Ascending aorta (tissue), 2 donors: ENCODE measurements at regions of chr20 and their contacts with region 1.

Region 1: GRCh38 chr20:17536944-17537444 is 5.8 kb upstream of the BFSP1 start:
- DNase-seq: peak in 1 of 2 donors; percentile 89
- H3K4me3 ChIP-seq: no peak overlapping the region
- H3K27ac ChIP-seq: peak overlapping the region; percentile 7 to 49
- H3K4me1 ChIP-seq: peaks cover 5 to 21% of the 10 kb centered on the region in 2 donors
- H3K27me3 ChIP-seq: no peaks in the 10 kb centered on the region
- CTCF ChIP-seq: peak; percentile 82 to 95 (median 92)

Region 2: DNA sequence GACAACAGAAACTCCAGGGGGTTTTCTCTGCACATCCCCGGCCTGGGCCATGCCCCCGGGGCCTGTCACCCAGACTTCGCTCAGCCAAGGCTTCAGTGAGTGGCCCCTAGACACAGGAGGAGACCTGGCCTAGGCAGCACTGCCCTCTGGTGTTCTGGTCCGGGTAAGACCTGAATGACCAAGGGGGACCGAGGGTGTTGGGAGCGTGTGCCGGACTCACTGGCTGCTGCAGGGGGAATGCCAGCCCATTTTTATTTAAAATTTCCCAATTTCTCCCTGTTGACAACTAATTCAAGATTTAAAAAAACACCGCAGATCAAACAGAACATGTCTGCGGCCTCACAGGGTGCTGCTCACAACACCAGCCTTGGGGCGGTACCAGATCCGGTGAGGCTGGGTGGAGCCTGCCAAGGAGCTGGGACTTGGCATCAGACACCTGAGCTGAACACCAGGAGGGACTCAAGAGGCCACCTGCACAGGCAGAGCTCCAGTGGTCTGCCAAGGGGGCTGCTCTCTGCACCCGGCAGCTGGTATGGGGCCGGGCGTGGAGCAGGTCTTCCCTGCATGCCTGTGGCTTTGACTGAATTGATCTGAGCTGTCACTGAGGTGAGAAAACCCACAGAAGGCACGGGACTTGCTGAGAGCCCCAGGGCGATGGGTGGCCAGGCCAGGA is 80.7 kb after region 1 on chr20:
- intact Hi-C with region 1: loop called (anchors 1 kb)
- DNase-seq: peak in 1 of 2 donors; percentile 84
- H3K4me3 ChIP-seq: no peak overlapping the region
- H3K27ac ChIP-seq: peak overlapping the region; percentile 18 to 25
- H3K4me1 ChIP-seq: peaks cover 12 to 35% of the 10 kb centered on the region in 2 donors
- H3K27me3 ChIP-seq: no peaks in the 10 kb centered on the region
- CTCF ChIP-seq: peak; percentile 78 to 90 (median 80)

Region 3: GRCh38 chr20:17721802-17722486 is 184.9 kb after region 1 on chr20:
- intact Hi-C with region 1: no loop called
- DNase-seq: no peak
- H3K4me3 ChIP-seq: no peak overlapping the region
- H3K27ac ChIP-seq: no peak overlapping the region
- H3K4me1 ChIP-seq: no peaks in the 10 kb centered on the region
- H3K27me3 ChIP-seq: no peaks in the 10 kb centered on the region
- CTCF ChIP-seq: no peak